GM10248 (cell line): ENCODE measurements at regions of chr16 and their contacts with region 1.

Region 1: GRCh38 chr16:88754912-88755744 is 29.9 kb downstream of the PIEZO1 start:
- DNase-seq: no peak
- CTCF ChIP-seq: peak; percentile 32

Region 2: GRCh38 chr16:88585269-88585668 is 169.9 kb before region 1 on chr16:
- CTCF ChIA-PET with region 1: no interaction called
- POLR2A ChIA-PET with region 1: no interaction called
- DNase-seq: no peak
- CTCF ChIP-seq: no peak

Region 3: GRCh38 chr16:88743693-88744576 is 11.2 kb before region 1 on chr16:
- CTCF ChIA-PET with region 1: interaction called, 68 read pairs
- POLR2A ChIA-PET with region 1: no interaction called
- DNase-seq: peak; percentile 82
- CTCF ChIP-seq: peak; percentile 76